Right ventricle myocardium inferior (tissue), 1 donor: ENCODE measurements at regions of chr1 and their contacts with region 1.

Region 1: DNA sequence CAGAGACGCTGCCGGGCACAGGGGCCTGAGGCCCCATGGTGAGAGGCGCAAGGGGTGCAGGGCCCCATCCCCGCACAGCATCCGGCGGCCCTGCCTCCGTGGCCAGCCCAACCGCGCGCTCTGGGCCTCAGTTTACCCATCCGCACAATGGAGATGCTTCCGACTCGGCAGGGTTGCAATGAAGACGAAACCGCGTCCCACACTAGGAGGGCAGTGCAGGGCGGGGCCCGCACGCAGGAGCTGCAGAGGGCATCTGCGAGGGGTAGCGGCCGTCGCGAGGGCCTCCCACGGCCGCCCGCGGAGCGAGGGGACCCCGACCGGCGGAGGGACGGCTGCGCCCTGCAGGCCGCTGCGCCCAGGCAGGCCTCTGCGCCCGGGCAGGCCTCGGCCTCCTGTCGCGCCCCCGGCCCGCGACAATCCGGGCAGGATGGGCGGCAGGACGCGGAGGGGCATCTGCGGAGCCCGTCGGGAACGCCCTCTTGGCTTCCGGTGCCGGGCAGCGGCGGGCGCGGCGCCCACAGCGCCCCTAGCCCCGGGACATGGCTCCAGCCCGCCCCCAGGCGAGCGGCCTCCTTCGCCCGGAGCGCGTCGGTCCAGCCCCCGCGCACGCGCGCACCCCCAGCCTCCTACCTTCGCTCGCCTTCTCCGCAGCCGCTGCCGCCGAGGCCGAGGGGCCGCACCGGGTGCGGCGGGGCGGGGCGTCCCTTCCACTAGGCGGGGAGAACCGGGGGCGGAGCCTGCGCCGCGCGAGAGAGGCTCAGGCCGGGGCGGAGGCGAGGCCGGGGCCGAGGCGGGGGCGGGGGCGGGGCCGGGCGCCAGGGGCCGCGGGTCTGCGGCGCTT is 15.3 kb downstream of the RNU1-1 start:
- DNase-seq: peak; percentile 95
- ATAC-seq: peak; percentile 95

Region 2: DNA sequence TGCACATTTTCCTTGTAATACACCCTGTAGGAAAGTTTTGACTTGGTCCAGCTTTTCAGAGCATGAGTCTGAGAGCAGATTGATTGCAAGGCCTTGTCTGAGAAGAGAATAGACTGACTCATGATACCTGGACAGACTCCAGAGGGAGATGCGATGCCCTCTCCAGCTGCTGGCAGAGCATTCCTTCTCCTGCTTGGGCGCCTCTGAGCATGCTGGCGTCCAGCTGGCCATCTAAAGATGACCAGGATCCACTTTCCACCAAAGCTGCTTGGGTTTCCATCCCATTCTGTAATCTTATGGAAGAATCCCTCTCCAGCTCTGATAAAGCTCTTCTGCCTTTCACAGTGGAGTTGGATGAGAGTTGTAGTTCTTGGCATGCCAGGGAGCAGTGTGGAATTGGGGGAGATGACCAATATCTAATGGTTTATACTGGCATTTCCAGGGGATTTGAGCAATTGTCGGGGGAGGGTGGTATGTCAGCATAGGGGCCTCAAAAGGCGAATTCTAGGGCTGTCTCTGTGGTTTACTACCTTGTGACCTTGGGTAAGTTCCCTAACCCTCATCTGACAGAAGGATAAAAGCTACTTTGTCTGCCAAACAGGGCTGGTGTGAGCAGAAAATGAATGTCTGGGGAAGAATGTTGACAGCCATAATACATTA is 112.2 kb before region 1 on chr1:
- intact Hi-C with region 1: no loop called
- DNase-seq: no peak
- ATAC-seq: peak; percentile 47

Region 3: GRCh38 chr1:16440470-16441281 is 58.1 kb before region 1 on chr1 and contains the start of gene NECAP2:
- intact Hi-C with region 1: loop called (anchors 1 kb)
- DNase-seq: peak; percentile 97
- ATAC-seq: peak; percentile 96
- total RNA-seq, gene NECAP2: 17.7 TPM

Region 4: GRCh38 chr1:16521288-16521583 is 22.4 kb after region 1 on chr1:
- intact Hi-C with region 1: no loop called
- DNase-seq: no peak
- ATAC-seq: no peak